ENCODE measurements at regions of chr22 and their contacts with region 1.

Region 1: GRCh38 chr22:25048659-25049647 is 96.4 kb downstream of the KIAA1671 start:
- DNase-seq: no peak
- H3K4me3 ChIP-seq: no peak overlapping the region
- H3K27ac ChIP-seq: no peak overlapping the region
- H3K4me1 ChIP-seq: peaks cover 0 to 20% (median 0%) of the 10 kb centered on the region in 3 donors
- H3K27me3 ChIP-seq: no peaks in the 10 kb centered on the region
- CTCF ChIP-seq: peak; percentile 70 to 93 (median 84)
- POLR2A ChIP-seq: no peak

Region 2: GRCh38 chr22:24951942-24952836 is 96.8 kb before region 1 on chr22 and contains the start of gene KIAA1671:
- intact Hi-C with region 1: loop called (anchors 2 kb)
- DNase-seq: no peak
- H3K4me3 ChIP-seq: peak within 1 kb of the TSS; percentile 75 to 89 (median 80)
- H3K27ac ChIP-seq: peak within 1 kb of the TSS; percentile 83 to 94 (median 91)
- H3K4me1 ChIP-seq: peaks cover 6 to 73% (median 14%) of the 10 kb centered on the region in 3 donors
- H3K27me3 ChIP-seq: peaks cover 0 to 37% (median 0%) of the 10 kb centered on the region in 4 donors
- CTCF ChIP-seq: peak; percentile 89 to 99 (median 97)
- POLR2A ChIP-seq: peak in 3 of 4 donors; percentile 61 to 79 (median 78)
- total RNA-seq, gene KIAA1671: 43.1 to 73.2 (median 47.5) TPM